ENCODE measurements at regions of chr9 and their contacts with region 1.

Region 1: GRCh38 chr9:17402309-17402708 is 176.6 kb upstream of the SH3GL2 start:
- DNase-seq: no peak

Region 2: DNA sequence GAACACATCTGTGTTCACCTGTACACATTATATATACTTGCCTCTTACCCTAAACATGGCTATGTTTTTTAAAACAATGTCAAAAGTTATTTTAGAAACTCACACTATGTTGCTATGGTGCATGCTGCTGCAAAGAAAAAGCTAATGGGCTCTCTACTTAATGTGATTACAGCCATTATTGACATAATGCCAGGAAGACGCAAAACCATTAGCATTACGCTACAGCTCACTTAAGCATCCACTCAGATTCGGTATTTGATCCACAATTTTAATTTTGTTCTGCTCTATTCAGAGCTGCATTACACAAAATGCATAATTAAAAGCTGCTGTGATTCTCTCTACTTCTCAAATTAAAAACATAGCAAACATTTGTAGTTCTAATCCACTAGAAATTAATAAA is 927.1 kb before region 1 on chr9:
- intact Hi-C with region 1: loop called in 1 of 2 experiments (anchors 5 kb)
- DNase-seq: no peak

Measured in posterior vena cava (tissue), 2 donors.